RWPE1 (cell line): ENCODE measurements at regions of chr20 and their contacts with region 1.

Region 1: DNA sequence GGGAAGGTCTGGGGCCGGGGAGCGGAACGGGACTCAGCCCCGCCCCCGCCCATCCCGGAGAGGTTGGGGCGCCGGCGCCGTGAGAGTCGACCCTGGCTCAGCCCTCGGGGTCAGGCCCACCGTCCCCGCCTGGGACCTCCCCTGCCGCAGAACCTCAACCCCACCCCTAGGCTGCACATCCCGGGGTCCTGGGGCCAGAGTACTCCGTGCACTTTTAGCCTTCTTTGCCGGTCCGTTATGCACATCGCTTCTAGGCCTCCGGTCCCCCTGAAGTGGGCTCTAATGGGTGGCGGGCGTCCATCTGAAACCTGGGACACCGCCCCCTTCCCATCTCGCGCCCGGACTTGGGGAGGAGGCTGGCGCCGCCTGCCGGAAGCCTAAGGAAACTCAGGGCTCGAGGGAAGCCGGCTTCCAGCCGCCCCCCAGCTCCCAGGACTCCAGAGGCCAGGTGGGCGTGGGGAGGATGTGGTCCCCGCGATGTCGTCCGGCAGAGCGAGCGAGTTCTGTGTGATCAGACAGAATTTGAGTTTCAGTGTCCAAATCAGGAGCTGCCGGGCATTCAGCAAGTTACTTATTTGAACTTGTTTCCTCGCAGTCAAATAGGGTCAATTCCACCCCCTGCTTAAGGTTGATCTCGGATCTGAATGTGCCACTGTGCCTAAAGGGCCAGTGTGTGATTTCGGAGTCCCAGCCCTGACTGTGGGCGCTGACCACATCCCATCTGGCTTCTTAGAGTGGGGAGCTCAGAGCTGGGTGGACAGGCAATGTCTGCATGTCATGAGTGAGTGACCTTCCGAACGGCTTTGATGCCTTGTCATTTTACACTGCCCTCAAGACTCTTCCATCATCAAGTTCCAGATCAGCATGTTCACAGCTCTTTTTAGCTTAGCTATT is 47.6 kb downstream of the CPXM1 start:
- DNase-seq: peak; percentile 44
- H3K27ac ChIP-seq: no peak overlapping the region
- CTCF ChIP-seq: peak; percentile 82

Region 2: DNA sequence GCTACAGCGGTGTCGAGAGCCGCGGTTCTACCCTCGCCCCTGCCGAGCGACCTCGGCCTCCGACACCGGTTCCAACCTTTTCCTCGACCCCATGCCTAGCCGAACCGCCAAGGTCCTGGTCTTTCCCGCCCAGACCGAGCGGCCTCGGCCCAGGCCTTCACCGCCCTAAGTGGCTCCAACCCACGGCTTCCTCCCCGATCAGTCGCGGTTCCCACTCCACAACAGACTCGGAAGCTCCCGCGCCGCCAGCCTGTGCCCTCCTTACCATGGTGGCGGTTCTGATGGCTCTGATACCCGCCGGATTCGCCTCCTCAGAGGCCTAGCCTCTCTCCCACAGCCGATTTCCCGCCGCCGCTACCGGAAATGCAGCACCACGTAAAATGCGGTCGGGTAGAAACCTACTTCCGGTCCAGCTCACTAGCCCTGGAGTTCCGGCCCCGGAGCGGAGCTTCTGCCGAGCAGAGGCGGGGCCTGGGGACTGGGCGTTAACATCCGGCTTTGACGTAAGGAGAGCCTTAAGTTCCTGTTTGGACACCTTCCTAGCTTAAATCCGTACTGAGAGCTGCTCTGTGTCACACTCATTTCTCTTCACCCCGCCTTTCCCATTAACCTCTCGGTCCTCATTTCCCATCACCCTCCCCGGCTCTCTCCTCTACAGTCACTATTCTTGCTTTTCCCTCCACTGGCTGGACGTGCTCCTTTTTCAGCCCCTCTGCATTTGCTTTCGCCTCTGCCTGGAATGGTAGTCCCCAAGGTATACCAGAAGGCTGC is 282.2 kb before region 1 on chr20 and contains the start of gene SNRPB:
- CTCF ChIA-PET with region 1: no interaction called
- POLR2A ChIA-PET with region 1: no interaction called
- DNase-seq: peak; percentile 99
- H3K27ac ChIP-seq: peak within 1 kb of the TSS; percentile 91
- CTCF ChIP-seq: no peak

Region 3: GRCh38 chr20:2767768-2768631 is 15.2 kb after region 1 on chr20:
- CTCF ChIA-PET with region 1: interaction called, 19 read pairs
- POLR2A ChIA-PET with region 1: no interaction called
- DNase-seq: peak; percentile 82
- H3K27ac ChIP-seq: peak overlapping the region; percentile 64
- CTCF ChIP-seq: no peak